ENCODE measurements at regions of chr10 and their contacts with region 1.

Region 1: DNA sequence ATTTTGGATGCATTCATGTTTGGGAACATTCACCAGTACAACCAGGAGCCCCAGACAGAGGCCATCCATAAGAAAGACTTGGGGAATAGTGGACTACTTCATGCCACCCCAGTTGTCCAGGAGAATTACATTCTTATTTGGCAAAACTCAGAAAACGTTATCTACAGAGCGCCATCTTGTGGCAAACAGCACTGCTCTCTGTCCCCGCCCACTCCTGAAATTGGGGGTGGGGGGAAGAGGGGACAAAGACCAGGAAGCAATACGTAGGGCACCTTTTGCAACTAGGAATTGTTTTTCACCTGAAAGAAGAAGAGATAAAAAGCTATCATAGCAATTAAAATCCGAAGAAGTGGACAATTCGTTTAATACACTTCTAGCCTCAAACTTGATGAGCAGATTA is 134.6 kb upstream of the MGMT start:
- DNase-seq: peak in 1 of 5 donors; percentile 32
- H3K4me3 ChIP-seq: no peak overlapping the region
- H3K4me3 Mint-ChIP-seq: no peak overlapping the region
- H3K27ac ChIP-seq: no peak overlapping the region
- H3K27ac Mint-ChIP-seq: no peak overlapping the region
- H3K4me1 ChIP-seq: no peaks in the 10 kb centered on the region
- H3K4me1 Mint-ChIP-seq: no peaks in the 10 kb centered on the region
- H3K27me3 ChIP-seq: no peaks in the 10 kb centered on the region
- H3K27me3 Mint-ChIP-seq: peaks cover 0 to 5% of the 10 kb centered on the region in 2 donors

Region 2: GRCh38 chr10:129030996-129031843 is 301.3 kb before region 1 on chr10:
- CTCF ChIA-PET with region 1: interaction called, 31 read pairs
- POLR2A ChIA-PET with region 1: no interaction called
- DNase-seq: peak in 3 of 5 donors; percentile 30 to 66 (median 60)
- H3K4me3 ChIP-seq: no peak overlapping the region
- H3K4me3 Mint-ChIP-seq: peak overlapping the region in 1 of 7 donors; percentile 9
- H3K27ac ChIP-seq: no peak overlapping the region
- H3K27ac Mint-ChIP-seq: peak overlapping the region in 1 of 8 donors; percentile 50
- H3K4me1 ChIP-seq: peaks cover 22% of the 10 kb centered on the region
- H3K4me1 Mint-ChIP-seq: peaks cover 16 to 30% (median 24%) of the 10 kb centered on the region in 3 donors
- H3K27me3 ChIP-seq: no peaks in the 10 kb centered on the region
- H3K27me3 Mint-ChIP-seq: peaks cover 0 to 1% of the 10 kb centered on the region in 2 donors

Region 3: GRCh38 chr10:129320340-129320739 is 12.1 kb before region 1 on chr10:
- CTCF ChIA-PET with region 1: no interaction called
- POLR2A ChIA-PET with region 1: no interaction called
- DNase-seq: no peak
- H3K4me3 ChIP-seq: no peak overlapping the region
- H3K4me3 Mint-ChIP-seq: no peak overlapping the region
- H3K27ac ChIP-seq: no peak overlapping the region
- H3K27ac Mint-ChIP-seq: no peak overlapping the region
- H3K4me1 ChIP-seq: no peaks in the 10 kb centered on the region
- H3K4me1 Mint-ChIP-seq: no peaks in the 10 kb centered on the region
- H3K27me3 ChIP-seq: no peaks in the 10 kb centered on the region
- H3K27me3 Mint-ChIP-seq: no peaks in the 10 kb centered on the region

Region 4: DNA sequence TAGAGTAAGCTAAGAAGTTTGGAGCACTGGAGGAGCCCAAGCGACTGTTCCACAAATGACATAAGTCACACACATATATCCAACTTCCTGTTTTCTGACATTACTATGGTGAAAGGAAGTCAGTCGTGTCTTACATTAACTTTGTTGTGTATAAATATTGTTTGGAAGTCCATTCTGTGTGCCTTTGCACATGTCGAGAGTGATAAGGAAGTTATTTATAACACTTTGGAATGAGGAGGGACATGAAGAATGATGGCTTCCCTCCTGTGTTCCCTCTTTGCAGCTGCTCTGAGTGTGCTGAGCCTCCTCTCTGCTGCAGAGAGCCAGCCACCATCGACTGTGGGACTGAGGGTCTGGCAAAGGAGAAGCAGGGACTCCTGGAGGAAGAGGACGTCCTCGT is 94.1 kb after region 1 on chr10:
- CTCF ChIA-PET with region 1: no interaction called
- POLR2A ChIA-PET with region 1: no interaction called
- DNase-seq: no peak
- H3K4me3 ChIP-seq: no peak overlapping the region
- H3K4me3 Mint-ChIP-seq: no peak overlapping the region
- H3K27ac ChIP-seq: no peak overlapping the region
- H3K27ac Mint-ChIP-seq: no peak overlapping the region
- H3K4me1 ChIP-seq: no peaks in the 10 kb centered on the region
- H3K4me1 Mint-ChIP-seq: no peaks in the 10 kb centered on the region
- H3K27me3 ChIP-seq: no peaks in the 10 kb centered on the region
- H3K27me3 Mint-ChIP-seq: peaks cover 2 to 19% of the 10 kb centered on the region in 2 donors

Measured in CD8-positive, alpha-beta memory T cell (primary cell).